WTC11 (cell line): ENCODE measurements at regions of chr18 and their contacts with region 1.

Region 1: DNA sequence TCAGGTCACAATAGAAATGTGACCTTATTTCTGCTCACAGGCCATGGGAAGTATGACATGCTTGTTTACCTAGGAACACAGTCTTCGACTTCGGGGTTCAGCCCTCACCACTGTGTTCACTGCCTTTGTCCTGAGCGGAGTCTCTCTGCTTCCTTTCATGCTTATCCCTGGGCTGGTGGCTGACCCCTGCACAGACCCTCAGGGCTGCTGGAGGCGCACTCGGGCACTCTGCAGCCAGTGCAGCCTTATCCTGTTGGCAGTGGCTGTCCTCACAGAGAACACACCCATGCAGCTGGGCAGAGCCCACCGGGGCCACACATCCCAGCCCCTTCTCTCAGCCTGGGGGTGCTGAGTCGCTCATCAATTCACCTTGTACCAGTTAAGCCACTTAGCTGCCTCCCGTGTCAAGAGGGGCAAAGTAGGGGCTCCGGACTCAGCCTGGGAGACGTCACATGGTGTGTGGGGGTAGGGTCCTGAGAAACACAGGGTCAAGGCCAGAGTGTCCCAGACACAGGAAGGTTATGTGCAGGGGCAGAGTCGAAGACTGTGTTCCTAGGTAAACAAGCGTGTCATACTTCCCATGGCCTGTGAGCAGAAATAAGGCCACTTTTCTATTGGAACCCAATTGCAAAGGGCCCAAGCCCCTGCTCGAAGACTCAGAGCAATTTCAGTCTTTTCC is 107.5 kb downstream of the FAM210A start:
- DNase-seq: no peak
- ATAC-seq: no peak
- H3K4me3 Mint-ChIP-seq: no peak overlapping the region
- H3K27ac Mint-ChIP-seq: 0 out of 2 replicates have a peak overlapping the region, but pooled peaks have one; percentile 65
- H3K4me1 Mint-ChIP-seq: peaks cover 2% of the 10 kb centered on the region; the same call in 1 of the 2 replicates
- H3K27me3 Mint-ChIP-seq: peaks cover under 1% of the 10 kb centered on the region; the same call in 1 of the 2 replicates
- CTCF ChIP-seq: no peak

Region 2: GRCh38 chr18:13594551-13594950 is 24.3 kb before region 1 on chr18:
- CTCF ChIA-PET with region 1: no interaction called
- POLR2A ChIA-PET with region 1: interaction called, 10 read pairs
- DNase-seq: no peak
- ATAC-seq: no peak
- H3K4me3 Mint-ChIP-seq: no peak overlapping the region
- H3K27ac Mint-ChIP-seq: no peak overlapping the region
- H3K4me1 Mint-ChIP-seq: no peaks in the 10 kb centered on the region
- H3K27me3 Mint-ChIP-seq: peaks cover 3% of the 10 kb centered on the region; the same call in 1 of the 2 replicates
- CTCF ChIP-seq: no peak